SK-N-SH (cell line): ENCODE measurements at regions of chr14 and their contacts with region 1.

Region 1: GRCh38 chr14:23478111-23478759 is 8.7 kb downstream of the NGDN start:
- DNase-seq: peak; percentile 39
- H3K4me3 ChIP-seq: no peak overlapping the region
- H3K27ac ChIP-seq: no peak overlapping the region
- H3K4me1 ChIP-seq: no peaks in the 10 kb centered on the region
- H3K27me3 ChIP-seq: no peaks in the 10 kb centered on the region
- CTCF ChIP-seq: peak; percentile 85
- EP300 ChIP-seq: no peak
- RAD21 ChIP-seq: peak; percentile 87

Region 2: DNA sequence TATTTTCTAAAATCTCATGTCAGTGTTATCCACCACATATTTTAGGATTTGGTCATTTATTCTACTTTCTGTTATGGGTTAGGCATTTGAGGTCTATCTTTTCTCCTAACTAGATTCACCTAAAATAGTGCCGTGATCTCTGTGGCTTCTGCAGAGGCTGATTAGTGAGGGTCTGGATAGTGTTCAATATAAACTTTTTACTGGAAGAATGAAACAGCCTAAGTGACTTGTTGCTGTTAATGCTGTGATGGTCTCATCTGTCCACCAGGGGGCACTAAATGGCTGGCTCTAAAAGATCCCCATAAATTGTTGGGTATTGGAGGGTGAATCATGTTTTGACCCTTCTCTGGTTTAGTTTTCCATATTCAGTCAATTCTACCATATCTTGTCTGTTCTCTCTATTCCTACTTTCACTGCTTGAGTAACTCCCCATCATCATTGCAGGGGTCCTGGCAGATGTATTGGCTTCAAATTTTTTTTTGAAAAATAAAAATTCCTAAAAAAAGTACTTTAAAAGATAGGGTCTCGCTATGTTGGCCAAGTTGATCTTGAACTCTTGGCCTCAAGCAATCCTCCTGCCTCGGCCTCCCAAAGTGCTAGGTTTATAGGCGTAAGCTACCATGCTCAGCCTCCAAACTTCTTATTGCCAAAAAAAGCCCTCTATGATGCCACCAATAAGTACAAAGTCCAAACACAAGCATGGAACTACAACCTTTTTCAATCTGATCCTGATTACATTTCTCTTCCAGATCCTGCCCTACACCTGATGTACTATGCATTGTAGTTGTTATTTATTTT is 150.1 kb before region 1 on chr14:
- CTCF ChIA-PET with region 1: interaction called, 11 read pairs
- POLR2A ChIA-PET with region 1: no interaction called
- DNase-seq: peak; percentile 86
- H3K4me3 ChIP-seq: no peak overlapping the region
- H3K27ac ChIP-seq: no peak overlapping the region
- H3K4me1 ChIP-seq: peaks cover 3 to 4% of the 10 kb centered on the region in 2 experiments; a peak in 3 of 4 replicates
- H3K27me3 ChIP-seq: no peaks in the 10 kb centered on the region
- CTCF ChIP-seq: peak; percentile 93
- EP300 ChIP-seq: no peak
- RAD21 ChIP-seq: peak; percentile 96

Region 3: DNA sequence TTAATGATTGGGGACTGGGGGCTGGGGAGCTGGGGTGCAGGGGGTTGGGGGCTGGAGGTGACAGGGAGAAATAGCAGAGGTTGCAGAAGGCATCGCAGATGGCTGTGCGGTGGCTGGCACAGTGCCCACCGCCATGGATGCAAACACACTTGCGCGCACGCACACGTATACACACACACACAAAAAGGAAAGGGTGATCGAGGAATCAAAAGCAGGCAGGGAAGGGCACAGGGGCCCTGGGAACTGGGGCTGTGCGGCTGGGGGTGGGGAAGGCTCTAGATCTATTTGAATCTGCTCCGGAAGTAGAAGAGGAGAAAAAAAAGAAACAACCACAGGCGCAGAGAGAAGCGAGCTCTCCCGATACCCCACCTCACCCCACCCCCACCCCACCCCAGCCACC is 33.9 kb after region 1 on chr14:
- CTCF ChIA-PET with region 1: interaction called, 14 read pairs
- POLR2A ChIA-PET with region 1: no interaction called
- DNase-seq: peak; percentile 77
- H3K4me3 ChIP-seq: peak overlapping the region in 1 of 2 experiments; percentile 34; a peak in 2 of 4 replicates
- H3K27ac ChIP-seq: peak overlapping the region in 1 of 2 experiments; percentile 63; a peak in 1 of 4 replicates
- H3K4me1 ChIP-seq: peaks cover 0 to 38% of the 10 kb centered on the region in 2 experiments; a peak in 1 of 4 replicates
- H3K27me3 ChIP-seq: no peaks in the 10 kb centered on the region
- CTCF ChIP-seq: no peak
- EP300 ChIP-seq: no peak
- RAD21 ChIP-seq: no peak

Region 4: GRCh38 chr14:23528555-23528954 is 50.3 kb after region 1 on chr14:
- CTCF ChIA-PET with region 1: interaction called, 142 read pairs
- POLR2A ChIA-PET with region 1: no interaction called
- DNase-seq: peak; percentile 59
- H3K4me3 ChIP-seq: no peak overlapping the region
- H3K27ac ChIP-seq: no peak overlapping the region; a peak in 1 of 4 replicates
- H3K4me1 ChIP-seq: peaks cover 0 to 4% of the 10 kb centered on the region in 2 experiments; a peak in 1 of 4 replicates
- H3K27me3 ChIP-seq: no peaks in the 10 kb centered on the region
- CTCF ChIP-seq: peak; percentile 33; the same call in 1 of the 2 replicates
- EP300 ChIP-seq: no peak
- RAD21 ChIP-seq: no peak

Region 5: GRCh38 chr14:23544511-23545447 is 66.5 kb after region 1 on chr14:
- CTCF ChIA-PET with region 1: interaction called, 276 read pairs
- POLR2A ChIA-PET with region 1: no interaction called
- DNase-seq: no peak
- H3K4me3 ChIP-seq: no peak overlapping the region
- H3K27ac ChIP-seq: peak overlapping the region in 1 of 2 experiments; percentile 29; a peak in 1 of 4 replicates
- H3K4me1 ChIP-seq: peaks cover 0 to 16% of the 10 kb centered on the region in 2 experiments; a peak in 2 of 4 replicates
- H3K27me3 ChIP-seq: no peaks in the 10 kb centered on the region
- CTCF ChIP-seq: no peak
- EP300 ChIP-seq: no peak
- RAD21 ChIP-seq: no peak